Thyroid gland (tissue), 4 donors: ENCODE measurements at regions of chr2 and their contacts with region 1.

Region 1: GRCh38 chr2:121284463-121285449 is at the start of gene TFCP2L1:
- DNase-seq: peak; percentile 81 to 82
- H3K4me3 ChIP-seq: peak within 1 kb of the TSS; percentile 39 to 84 (median 75)
- H3K27ac ChIP-seq: peak within 1 kb of the TSS; percentile 82 to 90 (median 89)
- H3K4me1 ChIP-seq: peaks cover 5 to 21% of the 10 kb centered on the region in 2 donors
- H3K27me3 ChIP-seq: no peaks in the 10 kb centered on the region
- CTCF ChIP-seq: peak in 1 of 6 experiments; percentile 5
- POLR2A ChIP-seq: peak; percentile 97 to 100
- total RNA-seq, gene TFCP2L1: 97.4 to 188 (median 146) TPM

Region 2: GRCh38 chr2:121095257-121096080 is 189.3 kb before region 1 on chr2:
- intact Hi-C with region 1: loop called (anchors 10 kb)
- DNase-seq: peak; percentile 76 to 80
- H3K4me3 ChIP-seq: no peak overlapping the region
- H3K27ac ChIP-seq: no peak overlapping the region
- H3K4me1 ChIP-seq: peaks cover 8 to 11% of the 10 kb centered on the region in 2 donors
- H3K27me3 ChIP-seq: no peaks in the 10 kb centered on the region
- CTCF ChIP-seq: peak; percentile 36 to 89 (median 78)
- POLR2A ChIP-seq: no peak

Region 3: GRCh38 chr2:121237980-121238665 is 46.6 kb before region 1 on chr2:
- intact Hi-C with region 1: loop called (anchors 10 kb)
- DNase-seq: no peak
- H3K4me3 ChIP-seq: no peak overlapping the region
- H3K27ac ChIP-seq: peak overlapping the region; percentile 17 to 55 (median 24)
- H3K4me1 ChIP-seq: peaks cover 23 to 35% of the 10 kb centered on the region in 2 donors
- H3K27me3 ChIP-seq: no peaks in the 10 kb centered on the region
- CTCF ChIP-seq: no peak
- POLR2A ChIP-seq: no peak

Region 4: DNA sequence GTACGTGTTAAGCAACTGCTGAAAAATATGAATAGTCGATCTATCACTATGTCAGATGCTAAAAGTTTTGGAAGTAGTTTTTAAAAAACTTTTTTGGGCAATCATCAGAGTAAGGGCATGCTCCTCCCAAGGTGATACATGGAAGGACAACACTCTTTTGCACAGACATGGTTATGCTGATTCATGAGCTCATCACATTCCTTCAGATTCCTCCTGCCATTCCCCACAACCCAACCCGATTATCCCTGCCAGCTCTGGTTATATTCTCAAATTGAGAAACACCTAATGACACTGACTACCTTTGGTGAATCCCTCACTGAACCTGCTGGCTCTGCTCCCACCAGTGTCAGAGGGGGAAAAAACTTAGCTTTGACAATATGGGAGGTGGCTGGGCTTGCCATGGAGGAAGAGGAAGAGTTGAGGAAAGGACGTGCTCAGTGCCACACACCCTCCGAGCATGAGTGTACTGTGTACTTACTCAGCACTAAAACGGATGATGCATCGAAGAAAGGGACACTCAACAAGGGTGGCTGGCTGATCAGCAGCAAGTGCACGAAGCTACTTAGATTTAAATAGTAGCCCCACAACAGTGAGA is 162.0 kb after region 1 on chr2:
- intact Hi-C with region 1: no loop called
- DNase-seq: no peak
- H3K4me3 ChIP-seq: no peak overlapping the region
- H3K27ac ChIP-seq: no peak overlapping the region
- H3K4me1 ChIP-seq: no peaks in the 10 kb centered on the region
- H3K27me3 ChIP-seq: no peaks in the 10 kb centered on the region
- CTCF ChIP-seq: no peak
- POLR2A ChIP-seq: no peak